Esophagus squamous epithelium (tissue), 5 donors: ENCODE measurements at regions of chr3 and their contacts with region 1.

Region 1: GRCh38 chr3:50542177-50543034 is 25.1 kb downstream of the C3orf18 start:
- DNase-seq: no peak
- H3K4me3 ChIP-seq: no peak overlapping the region
- H3K27ac ChIP-seq: no peak overlapping the region
- H3K4me1 ChIP-seq: peaks cover 0 to 9% (median 0%) of the 10 kb centered on the region in 3 donors
- H3K27me3 ChIP-seq: peaks cover 0 to 19% (median 0%) of the 10 kb centered on the region in 4 donors
- CTCF ChIP-seq: peak; percentile 81 to 89 (median 84)
- POLR2A ChIP-seq: no peak

Region 2: DNA sequence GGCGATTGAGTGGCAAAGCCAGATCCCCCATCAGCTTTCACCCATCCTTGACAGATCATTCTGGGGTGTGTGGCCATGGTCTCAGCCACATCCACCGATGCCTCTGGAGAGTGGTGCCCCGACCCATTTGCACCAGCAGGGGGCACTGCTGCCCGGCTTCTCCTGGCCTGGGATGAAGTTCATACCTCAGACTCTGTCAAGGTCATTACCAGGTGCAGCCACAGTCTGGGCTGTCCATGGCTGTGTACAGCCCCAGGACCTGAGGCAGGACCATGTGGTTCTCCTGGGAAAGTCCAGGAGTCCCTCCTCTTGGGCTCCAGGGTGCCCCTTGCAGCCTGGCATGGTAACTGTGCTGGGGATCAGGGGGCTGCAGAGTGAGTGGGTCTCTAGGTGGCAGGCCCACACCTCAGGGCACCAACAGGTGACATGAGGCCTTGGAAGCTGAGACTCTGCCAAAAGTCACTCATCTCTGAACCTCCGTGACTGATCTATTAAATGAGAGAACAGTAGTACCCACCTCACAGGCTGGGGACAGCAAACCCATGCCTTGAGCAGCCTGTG is 106.2 kb before region 1 on chr3:
- intact Hi-C with region 1: loop called (anchors 5 kb)
- DNase-seq: no peak
- H3K4me3 ChIP-seq: no peak overlapping the region
- H3K27ac ChIP-seq: no peak overlapping the region
- H3K4me1 ChIP-seq: no peaks in the 10 kb centered on the region
- H3K27me3 ChIP-seq: peaks cover 0 to 12% (median 0%) of the 10 kb centered on the region in 4 donors
- CTCF ChIP-seq: peak; percentile 63 to 84 (median 76)
- POLR2A ChIP-seq: no peak

Region 3: DNA sequence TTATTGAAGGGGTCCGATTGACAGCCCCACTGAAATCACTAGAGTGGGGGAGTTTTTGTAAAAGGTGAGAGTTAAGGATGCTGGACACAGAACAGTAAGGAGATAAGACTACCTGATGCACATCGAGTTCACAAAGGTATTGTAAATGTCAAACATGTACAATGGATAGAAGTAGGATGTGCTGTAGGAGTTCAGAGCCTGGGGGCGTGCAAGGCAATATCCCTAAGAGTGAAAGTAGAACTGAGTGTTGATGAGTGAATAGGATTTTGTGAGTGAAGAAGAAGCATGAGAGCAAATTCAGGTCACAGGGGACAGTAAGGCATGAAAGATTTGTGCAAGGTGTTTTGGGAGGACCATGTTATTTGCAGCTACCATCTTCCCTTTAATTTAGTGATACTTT is 153.9 kb after region 1 on chr3:
- intact Hi-C with region 1: no loop called
- DNase-seq: no peak
- H3K4me3 ChIP-seq: no peak overlapping the region
- H3K27ac ChIP-seq: no peak overlapping the region
- H3K4me1 ChIP-seq: no peaks in the 10 kb centered on the region
- H3K27me3 ChIP-seq: no peaks in the 10 kb centered on the region
- CTCF ChIP-seq: no peak
- POLR2A ChIP-seq: no peak